ENCODE measurements at regions of chr2 and their contacts with region 1.

Region 1: DNA sequence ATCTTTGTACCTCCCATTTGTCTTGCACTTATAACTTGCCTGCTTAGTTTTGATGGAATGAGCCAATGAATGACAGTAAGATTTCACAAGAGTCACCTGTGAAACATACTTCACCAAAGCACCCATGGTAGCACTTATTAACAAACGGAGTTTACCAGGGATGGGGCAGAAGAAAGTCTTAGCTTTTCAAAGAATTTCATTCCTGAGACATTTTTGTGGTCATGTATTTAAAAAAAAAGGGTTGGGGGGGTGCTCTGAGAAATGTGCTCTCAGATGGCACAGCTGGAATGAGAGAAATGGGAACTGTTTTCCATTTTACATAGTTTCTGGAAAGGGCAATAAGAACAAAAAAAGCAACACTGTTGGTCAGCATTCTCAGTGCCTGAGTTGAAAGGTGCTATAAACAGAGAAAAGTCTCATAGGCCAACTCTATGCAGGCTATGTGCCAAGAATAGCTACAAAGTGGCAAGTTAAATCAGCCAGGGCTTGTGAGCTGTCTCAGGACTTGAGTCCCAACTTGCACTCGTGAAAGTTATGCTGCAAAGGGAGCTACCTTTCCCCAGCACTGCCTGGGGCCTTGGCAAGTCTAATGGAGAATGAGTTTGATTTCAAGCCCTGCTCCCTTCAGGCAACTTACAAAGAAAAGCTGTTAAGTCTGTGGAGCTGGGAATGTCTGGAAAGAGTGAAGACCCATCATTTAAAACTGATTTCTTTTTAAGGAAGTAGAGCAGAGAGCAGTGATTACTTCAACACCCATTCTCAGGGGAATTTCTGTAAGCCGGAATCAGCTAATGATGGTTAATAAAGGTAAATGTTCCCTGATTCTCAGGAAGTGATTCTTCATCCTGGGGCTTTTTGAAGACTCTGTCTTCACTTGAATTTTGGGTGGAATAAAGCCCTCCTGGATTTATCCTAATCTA is 170.6 kb downstream of the SLC8A1 start:
- DNase-seq: peak in 1 of 2 donors; percentile 71
- H3K4me3 ChIP-seq: peak overlapping the region in 1 of 2 donors; percentile 49
- H3K27ac ChIP-seq: peak overlapping the region; percentile 71 to 77
- H3K4me1 ChIP-seq: peaks cover 0 to 74% (median 27%) of the 10 kb centered on the region in 4 donors
- H3K27me3 ChIP-seq: no peaks in the 10 kb centered on the region
- CTCF ChIP-seq: no peak

Region 2: GRCh38 chr2:40244675-40245074 is 36.6 kb before region 1 on chr2:
- intact Hi-C with region 1: loop called (anchors 5 kb)
- DNase-seq: peak; percentile 59 to 82
- H3K4me3 ChIP-seq: no peak overlapping the region
- H3K27ac ChIP-seq: peak overlapping the region; percentile 29 to 48
- H3K4me1 ChIP-seq: peaks cover 0 to 30% (median 23%) of the 10 kb centered on the region in 4 donors
- H3K27me3 ChIP-seq: no peaks in the 10 kb centered on the region
- CTCF ChIP-seq: peak; percentile 54 to 57

Region 3: GRCh38 chr2:40451918-40452605 is 170.8 kb after region 1 on chr2 and contains the start of gene SLC8A1:
- intact Hi-C with region 1: loop called (anchors 10 kb)
- DNase-seq: peak in 1 of 2 donors; percentile 67
- H3K4me3 ChIP-seq: peak within 1 kb of the TSS; percentile 65 to 84
- H3K27ac ChIP-seq: peak within 1 kb of the TSS; percentile 64 to 81
- H3K4me1 ChIP-seq: peaks cover 0 to 25% (median 5%) of the 10 kb centered on the region in 4 donors
- H3K27me3 ChIP-seq: no peaks in the 10 kb centered on the region
- CTCF ChIP-seq: no peak

Measured in tibial artery (tissue), 4 donors.